Activated T-helper 1 cell treated with anti-CD3 and anti-CD28 coated beads, Interleukin-12 subunit alpha, Interleukin-12 subunit beta, Interleukin-2, Interleukin-4 antibody, amounts not matched to agents 30 ng/mL and 10 ng/mL and 1 ng/mL, durations not matched to agents 14 hours and 24 hours and 36 hours (primary cell): ENCODE measurements at regions of chr15 and their contacts with region 1.

Region 1: GRCh38 chr15:60326824-60327654 is 70.7 kb downstream of the ANXA2 start:
- DNase-seq: peak; percentile 13
- H3K4me3 Mint-ChIP-seq: no peak overlapping the region
- H3K27ac Mint-ChIP-seq: no peak overlapping the region
- H3K4me1 Mint-ChIP-seq: peaks cover 7% of the 10 kb centered on the region
- H3K27me3 Mint-ChIP-seq: peaks cover 56% of the 10 kb centered on the region

Region 2: GRCh38 chr15:59532770-59533379 is 794.2 kb before region 1 on chr15:
- intact Hi-C with region 1: no loop called
- DNase-seq: no peak
- H3K4me3 Mint-ChIP-seq: no peak overlapping the region
- H3K27ac Mint-ChIP-seq: no peak overlapping the region
- H3K4me1 Mint-ChIP-seq: peaks cover 12% of the 10 kb centered on the region
- H3K27me3 Mint-ChIP-seq: peaks cover 9% of the 10 kb centered on the region

Region 3: GRCh38 chr15:59741274-59741906 is 585.6 kb before region 1 on chr15:
- intact Hi-C with region 1: loop called (anchors 5 kb)
- DNase-seq: no peak
- H3K4me3 Mint-ChIP-seq: no peak overlapping the region
- H3K27ac Mint-ChIP-seq: no peak overlapping the region
- H3K4me1 Mint-ChIP-seq: no peaks in the 10 kb centered on the region
- H3K27me3 Mint-ChIP-seq: peaks cover 14% of the 10 kb centered on the region

Region 4: DNA sequence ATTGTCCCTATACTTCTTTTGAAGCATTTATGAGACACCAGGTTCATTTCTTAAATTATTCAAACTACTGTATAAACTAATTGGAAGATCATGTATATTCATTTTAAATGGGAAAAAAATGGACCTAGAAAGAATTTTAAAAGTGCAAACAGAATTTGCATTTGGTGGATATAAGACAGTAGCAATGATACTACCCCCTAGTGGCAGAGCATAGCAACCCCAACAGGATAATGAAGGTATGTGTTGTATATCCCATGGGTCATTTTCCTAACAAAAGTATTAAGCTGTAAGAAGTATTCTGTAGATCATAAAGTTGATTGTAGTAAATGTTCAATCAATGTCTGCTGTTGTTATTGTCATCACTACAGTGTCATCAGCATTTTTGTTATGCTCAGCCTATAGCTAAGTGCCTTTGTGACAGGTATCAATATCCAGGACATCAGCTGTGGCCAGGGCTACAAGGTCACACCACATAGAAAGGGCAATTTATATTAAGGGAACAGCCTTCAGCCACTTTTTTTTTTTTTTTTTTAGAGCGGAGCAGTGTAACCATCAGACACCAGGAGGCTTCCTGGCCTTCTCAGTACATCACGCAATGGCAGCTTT is 147.2 kb before region 1 on chr15:
- intact Hi-C with region 1: loop called (anchors 2 kb)
- DNase-seq: no peak
- H3K4me3 Mint-ChIP-seq: no peak overlapping the region
- H3K27ac Mint-ChIP-seq: no peak overlapping the region
- H3K4me1 Mint-ChIP-seq: no peaks in the 10 kb centered on the region
- H3K27me3 Mint-ChIP-seq: peaks cover 30% of the 10 kb centered on the region

Region 5: GRCh38 chr15:60520825-60521368 is 193.9 kb after region 1 on chr15:
- intact Hi-C with region 1: loop called (anchors 1 kb)
- DNase-seq: peak; percentile 63
- H3K4me3 Mint-ChIP-seq: no peak overlapping the region
- H3K27ac Mint-ChIP-seq: peak overlapping the region; percentile 71
- H3K4me1 Mint-ChIP-seq: peaks cover 58% of the 10 kb centered on the region
- H3K27me3 Mint-ChIP-seq: no peaks in the 10 kb centered on the region